H1 (cell line): ENCODE measurements at regions of chr12 and their contacts with region 1.

Region 1: GRCh38 chr12:57124259-57124877 is 3.9 kb upstream of the LRP1 start:
- DNase-seq: peak in 1 of 2 experiments; percentile 89
- H3K4me3 ChIP-seq: no peak overlapping the region
- H3K27ac ChIP-seq: no peak overlapping the region
- H3K4me1 ChIP-seq: peaks cover 0 to 5% (median 4%) of the 10 kb centered on the region in 4 experiments; a peak in 4 of 7 replicates
- H3K27me3 ChIP-seq: no peaks in the 10 kb centered on the region
- CTCF ChIP-seq: peak; percentile 83 to 99 (median 92)
- EP300 ChIP-seq: no peak
- POLR2A ChIP-seq: no peak
- RAD21 ChIP-seq: peak; percentile 83 to 85

Region 2: DNA sequence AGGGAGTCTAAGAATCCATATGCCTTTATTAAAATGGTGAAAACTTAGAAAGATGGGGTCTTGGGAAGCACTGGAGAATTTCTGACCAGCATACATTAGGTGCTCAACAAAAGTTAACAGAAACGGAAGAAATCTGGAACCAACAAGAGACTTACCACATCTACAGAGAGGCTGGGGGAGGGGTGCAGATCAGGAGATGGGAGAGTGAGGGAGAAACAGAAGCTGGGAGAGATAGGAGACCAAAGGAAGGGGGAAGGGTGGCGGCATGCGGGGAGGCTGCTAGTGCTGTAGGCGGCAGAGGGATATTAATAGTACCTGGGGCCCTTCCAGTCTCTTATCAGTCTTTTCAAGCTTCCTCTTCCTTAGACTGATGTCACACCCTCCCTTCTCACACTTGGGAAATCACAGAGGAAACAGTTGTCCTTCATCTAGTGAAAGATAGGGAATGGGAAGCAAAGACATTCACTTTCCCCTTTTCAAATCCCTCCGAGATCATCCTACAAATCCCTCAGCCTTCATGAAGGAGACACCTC is 136.1 kb before region 1 on chr12:
- CTCF ChIA-PET with region 1: no interaction called
- POLR2A ChIA-PET with region 1: no interaction called
- DNase-seq: peak in 1 of 2 experiments; percentile 46
- H3K4me3 ChIP-seq: peak overlapping the region in 1 of 4 experiments; percentile 15; a peak in 1 of 8 replicates
- H3K27ac ChIP-seq: no peak overlapping the region
- H3K4me1 ChIP-seq: peaks cover 0 to 3% (median under 1%) of the 10 kb centered on the region in 4 experiments; a peak in 2 of 7 replicates
- H3K27me3 ChIP-seq: no peaks in the 10 kb centered on the region
- CTCF ChIP-seq: no peak
- EP300 ChIP-seq: no peak
- POLR2A ChIP-seq: no peak
- RAD21 ChIP-seq: no peak

Region 3: DNA sequence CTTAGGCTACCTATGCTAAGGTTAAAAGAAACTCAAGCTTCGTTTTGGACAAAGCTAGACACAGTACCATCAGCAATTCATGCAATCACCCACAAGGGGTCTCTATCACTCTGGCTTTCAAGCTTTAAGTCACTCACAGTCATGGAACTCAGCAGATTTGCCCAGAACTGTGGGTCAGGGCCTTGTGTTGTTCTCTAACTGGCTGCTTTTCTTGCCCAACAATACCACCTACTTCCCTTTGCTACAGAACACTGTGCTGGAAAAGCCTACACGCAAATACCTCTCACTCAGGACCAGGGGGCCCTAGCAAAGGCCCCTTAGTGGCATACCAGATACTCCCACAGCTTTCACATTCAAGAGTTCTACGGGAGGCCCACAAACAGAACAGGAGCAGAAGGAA is 54.8 kb before region 1 on chr12:
- CTCF ChIA-PET with region 1: interaction called, 20 read pairs
- POLR2A ChIA-PET with region 1: interaction called, 4 read pairs
- DNase-seq: no peak
- H3K4me3 ChIP-seq: no peak overlapping the region
- H3K27ac ChIP-seq: no peak overlapping the region
- H3K4me1 ChIP-seq: no peaks in the 10 kb centered on the region
- H3K27me3 ChIP-seq: no peaks in the 10 kb centered on the region
- CTCF ChIP-seq: peak in 2 of 3 experiments; percentile 90 to 94; a peak in 3 of 4 replicates
- EP300 ChIP-seq: no peak
- POLR2A ChIP-seq: no peak
- RAD21 ChIP-seq: peak; percentile 95 to 97

Region 4: GRCh38 chr12:57101844-57102695 is 22.3 kb before region 1 on chr12:
- CTCF ChIA-PET with region 1: interaction called, 22 read pairs
- POLR2A ChIA-PET with region 1: interaction called, 105 read pairs
- DNase-seq: no peak
- H3K4me3 ChIP-seq: no peak overlapping the region
- H3K27ac ChIP-seq: peak overlapping the region; percentile 19; the same call in 1 of the 2 replicates
- H3K4me1 ChIP-seq: no peaks in the 10 kb centered on the region
- H3K27me3 ChIP-seq: no peaks in the 10 kb centered on the region
- CTCF ChIP-seq: no peak
- EP300 ChIP-seq: no peak
- POLR2A ChIP-seq: no peak
- RAD21 ChIP-seq: no peak

Region 5: DNA sequence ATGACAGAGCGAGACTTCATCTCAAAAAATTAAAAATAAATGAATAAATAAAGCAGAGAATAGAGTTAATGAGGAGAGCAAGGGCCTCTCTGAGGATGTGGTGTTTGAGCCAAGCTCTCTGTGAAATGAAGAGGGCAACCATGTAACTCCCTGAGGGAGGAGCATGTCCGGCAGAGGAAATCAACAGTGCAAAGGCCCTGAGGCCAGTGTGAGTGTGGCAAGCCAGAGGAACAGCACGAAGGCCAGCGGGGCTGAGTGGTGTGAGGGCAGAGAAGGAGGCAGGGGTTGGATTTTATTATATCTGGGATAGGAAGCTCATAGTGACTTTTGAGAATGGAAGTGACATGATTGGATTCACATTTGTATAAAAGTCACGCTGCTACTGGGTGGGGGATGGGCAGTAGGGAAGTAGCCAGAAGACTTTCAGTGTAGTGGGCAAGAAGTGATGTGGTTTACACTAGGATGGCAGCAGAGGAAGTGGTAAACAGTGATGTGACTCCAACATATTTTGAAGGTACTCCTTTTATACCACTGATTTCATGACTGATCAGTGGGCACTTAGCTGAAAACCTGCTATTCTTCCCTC is 33.3 kb after region 1 on chr12:
- CTCF ChIA-PET with region 1: interaction called, 70 read pairs
- POLR2A ChIA-PET with region 1: interaction called, 13 read pairs
- DNase-seq: no peak
- H3K4me3 ChIP-seq: no peak overlapping the region
- H3K27ac ChIP-seq: no peak overlapping the region
- H3K4me1 ChIP-seq: no peaks in the 10 kb centered on the region
- H3K27me3 ChIP-seq: no peaks in the 10 kb centered on the region
- CTCF ChIP-seq: no peak
- EP300 ChIP-seq: no peak
- POLR2A ChIP-seq: 0 out of 3 replicates have a peak, but pooled peaks of 1 of the 2 experiments have one; percentile 13
- RAD21 ChIP-seq: no peak

Region 6: GRCh38 chr12:57190037-57190436 is 65.7 kb after region 1 on chr12:
- CTCF ChIA-PET with region 1: interaction called, 18 read pairs
- POLR2A ChIA-PET with region 1: interaction called, 5 read pairs
- DNase-seq: no peak
- H3K4me3 ChIP-seq: no peak overlapping the region
- H3K27ac ChIP-seq: no peak overlapping the region
- H3K4me1 ChIP-seq: no peaks in the 10 kb centered on the region; a peak in 1 of 7 replicates
- H3K27me3 ChIP-seq: no peaks in the 10 kb centered on the region
- CTCF ChIP-seq: no peak
- EP300 ChIP-seq: no peak
- POLR2A ChIP-seq: no peak
- RAD21 ChIP-seq: no peak